Left ventricle myocardium inferior (tissue), 1 donor: ENCODE measurements at regions of chr5 and their contacts with region 1.

Region 1: DNA sequence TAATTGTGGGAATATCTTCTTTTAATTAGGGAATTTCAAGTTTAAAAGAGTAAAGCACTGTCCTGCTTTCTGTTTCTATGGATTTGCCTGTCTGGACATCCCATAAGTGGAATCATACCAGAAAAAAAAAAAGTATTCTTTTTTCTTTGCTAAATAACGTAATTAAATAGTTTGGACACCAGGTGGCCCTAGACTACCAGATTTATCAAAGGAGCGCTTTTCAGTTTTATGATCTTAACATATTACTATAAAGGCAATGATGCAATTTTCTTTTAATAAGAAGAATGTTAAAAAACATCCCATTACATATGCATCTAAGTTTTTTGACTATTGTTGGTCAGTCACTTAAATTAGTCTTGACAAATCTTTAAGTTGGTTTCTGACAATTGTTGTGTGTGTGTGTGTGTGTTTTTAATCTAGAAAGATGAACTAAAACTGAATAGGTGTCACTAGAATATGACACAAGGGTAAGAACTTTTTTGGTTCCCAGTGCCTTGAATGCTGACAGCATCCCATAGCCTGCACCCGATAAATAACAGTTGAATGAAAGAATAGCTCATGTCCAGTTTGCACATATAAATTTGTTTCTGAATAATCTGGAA is 49.5 kb downstream of the C5orf22 start:
- DNase-seq: no peak
- H3K4me3 ChIP-seq: no peak overlapping the region
- H3K27ac ChIP-seq: no peak overlapping the region
- H3K4me1 ChIP-seq: no peaks in the 10 kb centered on the region
- H3K27me3 ChIP-seq: no peaks in the 10 kb centered on the region
- CTCF ChIP-seq: peak; percentile 67

Region 2: GRCh38 chr5:31476738-31477141 is 104.9 kb before region 1 on chr5:
- intact Hi-C with region 1: no loop called
- DNase-seq: no peak
- H3K4me3 ChIP-seq: no peak overlapping the region
- H3K27ac ChIP-seq: no peak overlapping the region
- H3K4me1 ChIP-seq: peaks cover 13% of the 10 kb centered on the region
- H3K27me3 ChIP-seq: no peaks in the 10 kb centered on the region
- CTCF ChIP-seq: no peak

Region 3: DNA sequence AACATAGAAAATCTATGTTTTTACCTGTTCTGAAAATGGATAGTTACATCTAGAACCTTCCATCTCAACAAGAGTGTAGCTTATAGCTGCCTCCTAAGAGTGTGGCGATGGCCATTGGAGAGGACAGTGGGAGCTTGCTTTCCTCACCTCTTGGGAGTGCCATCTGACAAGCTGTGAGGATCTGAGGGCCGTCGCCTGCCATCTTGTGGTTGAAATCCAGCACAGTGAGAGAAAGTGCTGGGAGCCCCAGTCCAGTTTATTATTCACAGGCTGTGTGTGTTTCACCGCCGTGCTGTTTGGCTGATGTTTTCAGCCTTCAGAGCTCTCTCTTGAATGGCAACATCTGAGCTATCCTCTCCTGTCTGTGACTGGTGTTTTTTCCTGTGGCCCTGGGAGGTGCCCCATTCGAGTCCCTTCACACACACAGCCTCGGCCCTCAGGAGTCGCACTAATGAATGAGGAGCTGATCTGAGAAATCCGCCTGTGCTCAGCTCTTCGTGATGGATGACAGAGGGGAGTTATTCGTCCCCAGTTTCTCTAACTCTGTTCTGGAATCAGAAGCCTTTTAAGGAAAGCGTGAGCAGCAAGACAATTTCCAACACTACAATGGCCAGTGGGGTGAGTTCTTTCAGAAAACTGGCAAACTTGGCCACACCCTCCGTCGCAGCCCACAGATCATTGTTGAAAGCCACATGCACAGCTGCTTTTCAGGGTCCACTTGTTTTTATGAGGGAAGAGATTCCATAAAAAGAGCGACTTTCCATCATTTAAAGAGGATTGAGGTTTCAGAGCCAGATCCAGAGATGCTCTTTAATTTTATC is 227.7 kb after region 1 on chr5:
- intact Hi-C with region 1: loop called (anchors 5 kb)
- DNase-seq: peak; percentile 71
- H3K4me3 ChIP-seq: no peak overlapping the region
- H3K27ac ChIP-seq: peak overlapping the region; percentile 1
- H3K4me1 ChIP-seq: peaks cover 6% of the 10 kb centered on the region
- H3K27me3 ChIP-seq: no peaks in the 10 kb centered on the region
- CTCF ChIP-seq: peak; percentile 86

Region 4: GRCh38 chr5:32076699-32077695 is 495.4 kb after region 1 on chr5:
- intact Hi-C with region 1: loop called (anchors 5 kb)
- DNase-seq: peak; percentile 50
- H3K4me3 ChIP-seq: no peak overlapping the region
- H3K27ac ChIP-seq: peak overlapping the region; percentile 55
- H3K4me1 ChIP-seq: peaks cover 33% of the 10 kb centered on the region
- H3K27me3 ChIP-seq: no peaks in the 10 kb centered on the region
- CTCF ChIP-seq: peak; percentile 84